SK-N-SH (cell line): ENCODE measurements at regions of chr6 and their contacts with region 1.

Region 1: DNA sequence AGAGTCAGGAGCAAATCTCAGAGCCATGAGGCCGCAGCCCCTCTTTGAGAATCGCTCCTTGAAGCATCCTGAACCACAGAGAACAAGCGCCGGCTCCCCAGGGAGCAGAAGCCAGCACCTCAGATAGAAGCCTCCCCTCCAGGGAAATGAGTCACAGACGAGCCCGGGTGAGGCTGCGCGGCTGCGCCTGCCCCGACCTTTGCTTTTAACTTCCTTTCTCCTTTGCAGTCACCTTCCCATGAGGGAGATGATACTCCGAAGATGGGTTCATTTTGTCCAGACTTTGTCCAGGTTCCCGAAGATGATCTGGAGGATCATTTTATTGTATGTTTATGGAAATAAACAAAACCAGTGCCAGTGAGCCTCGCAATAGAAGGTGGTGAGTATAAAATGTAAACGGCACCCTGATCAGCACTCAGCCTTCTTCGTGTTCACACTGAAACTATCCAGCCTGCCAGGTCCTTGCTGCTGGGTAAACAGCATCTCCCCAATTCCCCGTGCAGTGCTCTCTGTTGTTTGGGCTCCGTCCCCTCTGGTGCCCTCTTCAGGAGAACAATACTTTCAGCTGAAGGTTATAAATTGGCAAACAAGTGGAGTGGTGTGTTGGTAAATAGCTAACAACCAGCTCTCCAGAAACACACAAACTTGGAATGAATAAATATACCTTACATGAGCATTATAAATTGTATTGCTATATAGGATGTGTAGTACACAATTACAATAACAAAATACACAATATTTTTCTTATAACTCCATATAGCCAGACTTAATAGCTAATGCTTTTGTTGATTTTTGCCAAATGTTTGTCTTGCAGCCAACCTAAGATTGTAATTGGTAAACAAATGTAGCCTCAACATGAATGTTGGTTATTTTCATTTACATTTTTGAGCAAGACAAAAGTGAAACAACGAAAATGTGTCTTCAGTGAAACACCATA is 41.4 kb upstream of the TMEM181 start:
- DNase-seq: peak; percentile 83
- H3K4me3 ChIP-seq: peak overlapping the region; percentile 38 to 67
- H3K27ac ChIP-seq: peak overlapping the region; percentile 58 to 72
- H3K4me1 ChIP-seq: peaks cover 5 to 12% of the 10 kb centered on the region in 2 experiments; a peak in 3 of 4 replicates
- H3K27me3 ChIP-seq: no peaks in the 10 kb centered on the region
- CTCF ChIP-seq: peak; percentile 77
- EP300 ChIP-seq: no peak
- RAD21 ChIP-seq: peak; percentile 74

Region 2: GRCh38 chr6:158506577-158506976 is 11.9 kb before region 1 on chr6:
- CTCF ChIA-PET with region 1: interaction called, 10 read pairs
- POLR2A ChIA-PET with region 1: interaction called, 3 read pairs
- DNase-seq: peak; percentile 69
- H3K4me3 ChIP-seq: no peak overlapping the region; a peak in 1 of 4 replicates
- H3K27ac ChIP-seq: no peak overlapping the region
- H3K4me1 ChIP-seq: no peaks in the 10 kb centered on the region
- H3K27me3 ChIP-seq: no peaks in the 10 kb centered on the region
- CTCF ChIP-seq: peak; percentile 37; the same call in 1 of the 2 replicates
- EP300 ChIP-seq: no peak
- RAD21 ChIP-seq: no peak